A549 (cell line): ENCODE measurements at regions of chr17 and their contacts with region 1.

Region 1: GRCh38 chr17:58631523-58632323 is 60.1 kb downstream of the TEX14 start:
- DNase-seq: peak; percentile 85 to 98
- ATAC-seq: peak; percentile 98 to 99
- H3K4me3 ChIP-seq: peak overlapping the region; percentile 40
- H3K27ac ChIP-seq: peak overlapping the region; percentile 83 to 89
- H3K4me1 ChIP-seq: peaks cover 9% of the 10 kb centered on the region
- CTCF ChIP-seq: peak; percentile 40; the same call in 2 of the 3 replicates
- EP300 ChIP-seq: no peak
- POLR2A ChIP-seq: peak; percentile 100
- RAD21 ChIP-seq: peak; percentile 40 to 50; a peak in 4 of 5 replicates

Region 2: GRCh38 chr17:58531661-58532554 is 99.8 kb before region 1 on chr17:
- CTCF ChIA-PET with region 1: interaction called, 5 read pairs
- POLR2A ChIA-PET with region 1: interaction called, 37 read pairs
- DNase-seq: no peak
- ATAC-seq: peak; percentile 51 to 66
- H3K4me3 ChIP-seq: peak overlapping the region; percentile 71
- H3K27ac ChIP-seq: peak overlapping the region; percentile 61 to 81
- H3K4me1 ChIP-seq: peaks cover 24% of the 10 kb centered on the region
- CTCF ChIP-seq: no peak
- EP300 ChIP-seq: no peak
- POLR2A ChIP-seq: 0 out of 2 replicates have a peak, but pooled peaks have one; percentile 7
- RAD21 ChIP-seq: no peak

Region 3: GRCh38 chr17:58605470-58605869 is 26.3 kb before region 1 on chr17:
- CTCF ChIA-PET with region 1: interaction called, 4 read pairs
- POLR2A ChIA-PET with region 1: interaction called, 22 read pairs
- DNase-seq: no peak
- ATAC-seq: peak; percentile 55 to 61; a peak in 4 of 6 replicates
- H3K4me3 ChIP-seq: no peak overlapping the region
- H3K27ac ChIP-seq: no peak overlapping the region
- H3K4me1 ChIP-seq: no peaks in the 10 kb centered on the region
- CTCF ChIP-seq: no peak
- EP300 ChIP-seq: no peak
- POLR2A ChIP-seq: no peak
- RAD21 ChIP-seq: no peak

Region 4: DNA sequence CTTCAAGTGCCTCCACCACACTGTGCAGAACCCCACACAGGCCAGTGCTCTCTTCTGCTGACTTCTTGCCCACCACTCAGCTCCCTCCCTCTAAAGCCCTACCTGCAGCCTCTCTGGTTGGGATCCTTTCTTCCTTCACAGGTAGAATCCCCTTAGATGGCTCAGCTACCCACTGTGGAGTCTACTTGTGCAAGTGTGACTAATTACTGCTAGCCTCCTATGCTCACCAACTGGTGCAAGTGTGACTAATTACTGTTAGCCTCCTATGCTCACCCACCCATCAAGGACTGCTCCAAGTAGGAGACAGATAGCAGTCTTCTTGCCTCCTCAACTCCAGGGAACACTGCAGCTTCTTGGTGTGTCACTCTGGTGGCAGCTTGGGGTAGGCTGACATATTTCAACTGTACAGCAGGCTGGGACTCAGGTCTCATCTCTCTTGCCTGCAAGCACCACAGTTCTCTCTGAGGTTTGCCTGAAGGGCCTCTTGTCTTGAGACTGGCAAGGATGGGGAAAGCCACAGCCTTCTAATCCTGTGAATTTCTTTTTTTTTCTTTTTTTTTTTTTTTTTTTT is 16.6 kb after region 1 on chr17:
- CTCF ChIA-PET with region 1: interaction called, 4 read pairs
- POLR2A ChIA-PET with region 1: interaction called, 102 read pairs
- DNase-seq: no peak
- ATAC-seq: peak; percentile 38 to 49; a peak in 5 of 6 replicates
- H3K4me3 ChIP-seq: no peak overlapping the region
- H3K27ac ChIP-seq: no peak overlapping the region
- H3K4me1 ChIP-seq: peaks cover 6% of the 10 kb centered on the region
- CTCF ChIP-seq: no peak
- EP300 ChIP-seq: no peak
- POLR2A ChIP-seq: no peak
- RAD21 ChIP-seq: no peak

Region 5: DNA sequence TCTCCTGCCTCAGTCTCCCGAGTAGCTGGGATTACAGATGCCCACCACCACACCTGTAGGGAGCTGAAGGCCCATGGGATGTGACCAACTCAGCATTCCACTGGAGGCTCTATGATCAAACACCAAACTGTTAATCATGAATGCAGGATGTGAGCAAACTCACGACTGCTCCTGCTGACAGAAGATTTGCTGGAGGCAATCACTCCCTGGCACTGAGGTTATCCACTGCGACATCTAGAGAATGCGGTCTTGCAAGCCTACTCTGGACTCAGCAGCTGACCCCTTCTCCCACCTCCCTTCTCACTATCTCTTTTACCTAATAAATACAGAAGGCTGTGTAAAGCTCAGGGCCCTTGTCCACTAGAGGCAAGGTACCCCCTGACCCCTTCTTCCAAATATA is 55.3 kb after region 1 on chr17:
- CTCF ChIA-PET with region 1: no interaction called
- POLR2A ChIA-PET with region 1: interaction called, 25 read pairs
- DNase-seq: no peak
- ATAC-seq: no peak
- H3K4me3 ChIP-seq: no peak overlapping the region
- H3K27ac ChIP-seq: no peak overlapping the region
- H3K4me1 ChIP-seq: 0 out of 3 replicates have a peak, but pooled peaks cover under 1% of the 10 kb centered on the region
- CTCF ChIP-seq: no peak
- EP300 ChIP-seq: no peak
- POLR2A ChIP-seq: no peak
- RAD21 ChIP-seq: no peak

Region 6: DNA sequence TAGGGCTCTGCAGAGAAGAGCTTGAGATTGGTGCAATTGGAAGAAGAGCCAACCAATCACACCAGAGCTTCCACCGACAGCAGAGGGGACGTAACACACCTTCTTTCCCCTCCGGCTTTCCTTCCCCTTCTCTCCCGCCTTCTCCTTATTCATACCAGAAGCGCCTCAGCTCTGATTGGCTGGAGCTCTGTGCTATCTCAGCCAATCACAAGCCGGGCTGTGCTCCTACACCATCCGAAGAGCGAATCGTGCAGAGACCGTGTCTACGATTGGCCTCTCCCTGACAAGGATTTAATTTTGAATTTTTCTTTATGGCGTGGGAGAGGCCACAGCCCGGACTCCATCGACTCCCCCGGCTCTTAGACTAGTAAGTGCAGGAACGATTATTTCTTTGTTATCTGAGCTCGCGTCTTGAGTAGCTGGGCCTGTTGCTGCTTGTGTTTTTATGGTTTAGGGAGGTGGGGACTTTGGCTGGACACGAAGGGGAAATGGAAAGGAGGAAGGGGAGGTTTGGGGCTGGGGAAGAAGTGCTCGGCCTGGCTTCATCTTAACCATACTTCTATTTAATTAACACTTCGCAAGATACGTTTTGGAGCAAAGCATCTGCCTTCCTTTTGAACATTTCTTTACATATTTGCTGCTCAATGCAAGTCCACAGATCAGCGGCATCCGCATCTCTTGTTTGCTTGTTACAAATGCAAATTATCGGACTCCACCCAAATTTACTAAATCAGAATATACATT is 523.9 kb after region 1 on chr17 and contains the start of gene PRR11:
- CTCF ChIA-PET with region 1: no interaction called
- POLR2A ChIA-PET with region 1: interaction called, 17 read pairs
- DNase-seq: no peak
- ATAC-seq: peak; percentile 93 to 94
- H3K4me3 ChIP-seq: peak within 1 kb of the TSS; percentile 77
- H3K27ac ChIP-seq: peak within 1 kb of the TSS; percentile 89 to 93
- H3K4me1 ChIP-seq: peaks cover 65% of the 10 kb centered on the region
- CTCF ChIP-seq: no peak
- EP300 ChIP-seq: no peak
- POLR2A ChIP-seq: no peak
- RAD21 ChIP-seq: no peak
- polyA plus RNA-seq, gene PRR11: 54.4 and 66.4 TPM in 2 replicates